CD14-positive monocyte (primary cell): ENCODE measurements at regions of chr3 and their contacts with region 1.

Region 1: DNA sequence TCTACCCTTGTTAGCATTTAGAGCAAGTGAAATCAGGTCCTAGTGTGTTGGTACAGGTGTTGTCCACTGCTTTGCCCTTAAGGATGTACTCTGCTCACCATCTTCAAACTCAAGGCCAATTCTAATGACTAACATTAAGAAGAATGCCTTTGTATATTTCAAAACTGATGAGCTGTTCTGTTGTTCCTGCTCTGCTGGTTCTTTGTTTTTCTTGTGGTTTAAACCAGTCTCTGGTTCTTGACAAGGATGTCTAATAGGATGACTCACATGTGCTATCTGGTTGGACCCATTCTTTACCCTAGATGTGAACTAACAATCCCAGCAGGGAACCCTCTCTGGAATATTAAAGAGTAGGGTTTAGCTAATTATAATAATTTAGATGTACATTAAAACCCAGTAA is 17.3 kb downstream of the ABHD5 start:
- DNase-seq: peak; percentile 39 to 79 (median 68)
- H3K4me3 ChIP-seq: peak overlapping the region in 1 of 3 experiments; percentile 2
- H3K4me3 Mint-ChIP-seq: no peak overlapping the region
- H3K27ac ChIP-seq: peak overlapping the region in 1 of 2 donors; percentile 86
- H3K27ac Mint-ChIP-seq: peak overlapping the region; percentile 51 to 91 (median 79)
- H3K4me1 ChIP-seq: peaks cover 26 to 27% of the 10 kb centered on the region in 2 donors
- H3K4me1 Mint-ChIP-seq: peaks cover 28% of the 10 kb centered on the region
- H3K27me3 ChIP-seq: no peaks in the 10 kb centered on the region
- H3K27me3 Mint-ChIP-seq: peaks cover 0 to 6% (median 0%) of the 10 kb centered on the region in 3 donors
- CTCF ChIP-seq: no peak

Region 2: DNA sequence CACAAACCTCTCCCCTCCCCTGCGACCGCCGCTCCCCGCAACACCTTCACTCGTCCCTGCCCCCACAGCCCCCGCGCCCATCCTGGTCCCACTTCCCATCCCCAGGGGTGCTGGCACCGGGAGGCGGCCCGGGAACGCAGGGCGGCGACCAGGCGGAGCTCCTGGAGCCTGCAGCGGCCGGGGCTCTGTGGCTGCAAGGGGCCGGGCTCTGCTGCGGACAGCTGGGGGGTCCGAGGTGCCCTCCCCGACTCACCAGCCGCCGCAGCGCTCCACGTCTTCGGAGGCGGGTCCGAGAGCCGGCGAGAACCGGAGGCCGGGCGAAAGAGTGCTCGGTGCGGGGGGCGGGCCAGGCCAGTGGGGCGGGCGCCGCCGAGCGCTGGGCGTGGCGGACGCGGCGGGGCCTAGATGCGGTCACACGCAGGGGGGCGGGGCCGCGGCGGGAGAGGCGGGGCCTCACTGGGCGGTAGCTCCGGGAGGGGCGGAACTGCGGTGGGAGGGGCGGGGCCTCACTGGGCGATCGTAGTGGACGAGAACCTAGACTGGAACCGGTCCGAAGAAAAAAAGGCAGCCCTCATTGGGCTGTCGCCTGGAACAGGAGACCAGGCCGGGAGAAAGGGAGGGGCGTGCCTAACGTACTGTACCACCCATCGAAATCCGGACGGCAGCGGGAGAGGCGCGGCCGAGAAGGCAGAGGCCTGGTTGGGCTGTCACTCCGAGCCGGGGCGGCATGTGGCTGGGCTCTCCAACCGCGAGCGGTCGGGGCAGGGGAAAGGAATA is 86.2 kb before region 1 on chr3 and contains the start of gene ANO10:
- intact Hi-C with region 1: loop called in 1 of 2 experiments (anchors 5 kb)
- DNase-seq: peak; percentile 97 to 99 (median 99)
- H3K4me3 ChIP-seq: peak within 1 kb of the TSS; percentile 76 to 92 (median 79)
- H3K4me3 Mint-ChIP-seq: peak within 1 kb of the TSS; percentile 92 to 97
- H3K27ac ChIP-seq: peak within 1 kb of the TSS; percentile 71 to 78
- H3K27ac Mint-ChIP-seq: peak within 1 kb of the TSS; percentile 90 to 95 (median 92)
- H3K4me1 ChIP-seq: peaks cover 20 to 35% of the 10 kb centered on the region in 2 donors
- H3K4me1 Mint-ChIP-seq: peaks cover 35% of the 10 kb centered on the region
- H3K27me3 ChIP-seq: no peaks in the 10 kb centered on the region
- H3K27me3 Mint-ChIP-seq: peaks cover 0 to 4% (median 2%) of the 10 kb centered on the region in 3 donors
- CTCF ChIP-seq: no peak
- polyA plus RNA-seq, gene ANO10: 11.2 to 24.8 (median 21.6) TPM